ENCODE measurements at regions of chr3 and their contacts with region 1.

Region 1: DNA sequence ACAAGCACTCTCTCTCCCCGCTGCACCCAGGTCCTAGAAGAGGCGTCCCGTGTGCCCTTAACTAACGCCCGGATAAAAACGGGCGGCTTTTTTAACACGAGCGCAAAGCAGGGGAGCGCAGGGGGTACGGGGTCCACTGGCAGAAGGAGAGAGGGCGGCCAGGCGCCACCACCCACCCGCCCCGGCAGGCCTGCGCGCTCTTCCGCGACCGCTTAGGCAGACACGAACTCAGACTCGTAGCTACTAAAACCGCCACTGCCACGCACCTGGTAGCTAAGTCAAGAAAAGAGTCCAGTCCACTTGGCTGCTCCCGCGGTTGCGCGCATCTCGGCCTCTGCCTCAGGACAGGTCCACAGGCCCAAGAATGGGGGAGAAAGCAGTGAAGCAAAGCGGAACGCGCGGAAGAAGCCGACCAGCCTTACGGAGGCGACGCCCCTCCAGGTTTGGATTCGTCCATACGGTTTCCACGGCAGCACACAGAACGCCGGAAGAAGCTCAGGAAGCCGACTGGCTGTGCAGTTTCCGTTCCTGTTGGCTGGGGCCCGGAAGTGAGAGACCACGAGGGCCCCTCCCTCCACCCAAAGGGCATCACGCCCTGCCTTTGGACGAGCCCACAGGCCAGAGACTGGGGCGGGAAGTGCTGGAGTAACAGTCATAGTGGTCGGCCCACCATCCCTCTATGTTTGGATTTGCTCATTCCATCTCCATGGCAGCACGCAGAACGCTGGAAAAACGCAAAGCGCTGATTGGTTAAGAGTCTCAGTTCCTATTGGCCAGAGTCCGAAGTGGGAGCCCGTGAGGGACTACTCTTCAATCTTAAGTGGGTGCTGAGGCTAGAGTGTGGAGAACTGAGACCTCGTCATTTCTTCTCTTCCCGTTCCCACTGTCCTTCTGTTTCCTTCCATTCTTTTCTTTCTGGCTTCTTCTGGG is at the start of gene ULK4:
- DNase-seq: peak; percentile 99
- H3K4me3 ChIP-seq: peak within 1 kb of the TSS; percentile 80 to 95 (median 92)
- H3K27ac ChIP-seq: peak within 1 kb of the TSS; percentile 82 to 94 (median 90)
- H3K4me1 ChIP-seq: peaks cover 10 to 20% (median 13%) of the 10 kb centered on the region in 4 donors
- H3K27me3 ChIP-seq: no peaks in the 10 kb centered on the region
- CTCF ChIP-seq: no peak
- EP300 ChIP-seq: no peak
- POLR2A ChIP-seq: peak; percentile 11
- total RNA-seq, gene ULK4: 4.2 to 15.4 (median 11.0) TPM

Region 2: GRCh38 chr3:42012935-42013690 is 51.1 kb after region 1 on chr3:
- intact Hi-C with region 1: loop called (anchors 5 kb)
- DNase-seq: no peak
- H3K4me3 ChIP-seq: peak overlapping the region; percentile 89 to 97 (median 94)
- H3K27ac ChIP-seq: peak overlapping the region; percentile 84 to 95 (median 91)
- H3K4me1 ChIP-seq: peaks cover 32 to 48% (median 44%) of the 10 kb centered on the region in 4 donors
- H3K27me3 ChIP-seq: no peaks in the 10 kb centered on the region
- CTCF ChIP-seq: peak in 1 of 3 experiments; percentile 20
- EP300 ChIP-seq: no peak
- POLR2A ChIP-seq: no peak

Region 3: GRCh38 chr3:42369304-42369703 is 407.3 kb after region 1 on chr3:
- intact Hi-C with region 1: no loop called
- DNase-seq: no peak
- H3K4me3 ChIP-seq: peak overlapping the region in 1 of 4 donors; percentile 9
- H3K27ac ChIP-seq: peak overlapping the region; percentile 11 to 49 (median 45)
- H3K4me1 ChIP-seq: peaks cover 3 to 34% (median 23%) of the 10 kb centered on the region in 4 donors
- H3K27me3 ChIP-seq: no peaks in the 10 kb centered on the region
- CTCF ChIP-seq: no peak
- EP300 ChIP-seq: no peak
- POLR2A ChIP-seq: no peak

Measured in esophagus muscularis mucosa (tissue), 4 donors.